ENCODE measurements at regions of chr3 and their contacts with region 1.

Region 1: GRCh38 chr3:12484198-12484974 is at the start of gene TSEN2:
- DNase-seq: peak; percentile 97
- H3K4me3 Mint-ChIP-seq: peak within 1 kb of the TSS; percentile 100
- H3K27ac Mint-ChIP-seq: peak within 1 kb of the TSS; percentile 98
- H3K4me1 Mint-ChIP-seq: peaks cover 40% of the 10 kb centered on the region
- H3K27me3 Mint-ChIP-seq: no peaks in the 10 kb centered on the region
- total RNA-seq, gene TSEN2: 33.4 and 33.5 TPM in 2 replicates

Region 2: DNA sequence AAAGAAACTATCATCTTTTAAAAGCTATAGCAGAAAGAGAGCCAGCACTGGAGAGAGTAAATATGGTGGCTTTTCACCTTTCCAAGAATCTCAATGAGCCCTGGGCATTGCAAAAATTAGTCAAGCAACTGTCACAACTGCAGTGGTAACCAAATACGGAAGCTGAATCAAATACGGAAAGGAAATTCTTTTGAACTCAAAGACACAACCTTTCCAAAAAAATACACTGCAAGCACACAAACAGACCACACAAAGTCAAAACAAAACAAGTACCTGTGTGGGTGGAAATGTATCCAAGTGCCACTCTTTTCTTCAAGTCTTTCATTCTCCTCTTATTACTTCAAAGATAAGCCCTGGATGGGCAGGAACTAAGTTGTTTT is 858.3 kb before region 1 on chr3:
- intact Hi-C with region 1: loop called (anchors 10 kb)
- DNase-seq: peak; percentile 42
- H3K4me3 Mint-ChIP-seq: peak overlapping the region; percentile 39
- H3K27ac Mint-ChIP-seq: peak overlapping the region; percentile 71
- H3K4me1 Mint-ChIP-seq: peaks cover 69% of the 10 kb centered on the region
- H3K27me3 Mint-ChIP-seq: no peaks in the 10 kb centered on the region

Region 3: GRCh38 chr3:12135029-12135657 is 349.2 kb before region 1 on chr3:
- intact Hi-C with region 1: loop called (anchors 1 kb)
- DNase-seq: peak; percentile 45
- H3K4me3 Mint-ChIP-seq: no peak overlapping the region
- H3K27ac Mint-ChIP-seq: no peak overlapping the region
- H3K4me1 Mint-ChIP-seq: no peaks in the 10 kb centered on the region
- H3K27me3 Mint-ChIP-seq: peaks cover 14% of the 10 kb centered on the region

Region 4: DNA sequence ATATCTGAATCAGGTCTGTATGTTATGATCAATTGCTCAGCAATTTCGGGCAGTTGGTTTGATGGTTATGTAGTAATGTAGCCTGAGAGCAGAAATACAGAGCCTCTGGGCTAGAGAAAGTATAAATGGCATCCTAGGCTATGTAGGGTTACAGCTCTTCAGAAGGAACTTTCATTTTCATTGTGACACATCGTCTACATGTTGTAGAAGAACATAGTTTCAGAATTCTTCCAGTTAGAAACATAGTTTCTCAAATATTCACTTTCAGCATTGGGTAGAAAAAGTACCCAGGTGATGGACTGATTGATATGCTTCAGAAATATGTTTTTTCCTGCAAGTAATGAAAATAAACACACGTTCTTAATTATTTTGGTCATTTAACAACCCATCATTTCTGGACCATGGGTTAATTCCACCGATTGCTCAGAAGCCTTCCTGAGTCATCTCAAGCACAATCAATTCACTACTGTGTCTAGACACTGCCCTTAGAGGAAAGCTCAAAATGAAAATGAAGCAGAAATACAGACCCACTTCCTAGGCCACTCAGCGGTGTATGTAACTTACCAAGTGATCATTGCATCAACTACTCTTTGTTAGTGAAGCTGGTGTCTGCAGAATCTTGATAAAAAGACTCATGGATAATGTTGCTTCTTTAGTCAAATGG is 88.9 kb before region 1 on chr3:
- intact Hi-C with region 1: loop called (anchors 1 kb)
- DNase-seq: no peak
- H3K4me3 Mint-ChIP-seq: peak overlapping the region; percentile 53
- H3K27ac Mint-ChIP-seq: peak overlapping the region; percentile 62
- H3K4me1 Mint-ChIP-seq: peaks cover 12% of the 10 kb centered on the region
- H3K27me3 Mint-ChIP-seq: peaks cover 19% of the 10 kb centered on the region

Region 5: GRCh38 chr3:12454076-12454815 is 30.1 kb before region 1 on chr3:
- intact Hi-C with region 1: no loop called
- DNase-seq: no peak
- H3K4me3 Mint-ChIP-seq: no peak overlapping the region
- H3K27ac Mint-ChIP-seq: no peak overlapping the region
- H3K4me1 Mint-ChIP-seq: no peaks in the 10 kb centered on the region
- H3K27me3 Mint-ChIP-seq: peaks cover 3% of the 10 kb centered on the region

Region 6: GRCh38 chr3:12841149-12841970 is 357.0 kb after region 1 on chr3 and contains the start of gene RPL32:
- intact Hi-C with region 1: loop called (anchors 2 kb)
- DNase-seq: peak; percentile 78
- H3K4me3 Mint-ChIP-seq: peak within 1 kb of the TSS; percentile 97
- H3K27ac Mint-ChIP-seq: peak within 1 kb of the TSS; percentile 99
- H3K4me1 Mint-ChIP-seq: peaks cover 39% of the 10 kb centered on the region
- H3K27me3 Mint-ChIP-seq: peaks cover 2% of the 10 kb centered on the region
- total RNA-seq, gene RPL32: 1,952 and 1,970 TPM in 2 replicates

Region 7: GRCh38 chr3:12884186-12884680 is 399.8 kb after region 1 on chr3:
- intact Hi-C with region 1: no loop called
- DNase-seq: no peak
- H3K4me3 Mint-ChIP-seq: no peak overlapping the region
- H3K27ac Mint-ChIP-seq: no peak overlapping the region
- H3K4me1 Mint-ChIP-seq: peaks cover 10% of the 10 kb centered on the region
- H3K27me3 Mint-ChIP-seq: peaks cover 44% of the 10 kb centered on the region